ENCODE measurements at regions of chr10 and their contacts with region 1.

Region 1: GRCh38 chr10:69506834-69507721 is 55.8 kb downstream of the TSPAN15 start:
- DNase-seq: no peak
- ATAC-seq: peak; percentile 3 to 49 (median 25)
- H3K4me3 ChIP-seq: peak overlapping the region in 5 of 10 donors; percentile 4 to 48 (median 33)
- H3K27ac ChIP-seq: peak overlapping the region in 6 of 10 donors; percentile 29 to 65 (median 50)
- H3K4me1 ChIP-seq: peaks cover 0 to 13% (median 8%) of the 10 kb centered on the region in 9 donors
- H3K27me3 ChIP-seq: no peaks in the 10 kb centered on the region
- CTCF ChIP-seq: no peak

Region 2: DNA sequence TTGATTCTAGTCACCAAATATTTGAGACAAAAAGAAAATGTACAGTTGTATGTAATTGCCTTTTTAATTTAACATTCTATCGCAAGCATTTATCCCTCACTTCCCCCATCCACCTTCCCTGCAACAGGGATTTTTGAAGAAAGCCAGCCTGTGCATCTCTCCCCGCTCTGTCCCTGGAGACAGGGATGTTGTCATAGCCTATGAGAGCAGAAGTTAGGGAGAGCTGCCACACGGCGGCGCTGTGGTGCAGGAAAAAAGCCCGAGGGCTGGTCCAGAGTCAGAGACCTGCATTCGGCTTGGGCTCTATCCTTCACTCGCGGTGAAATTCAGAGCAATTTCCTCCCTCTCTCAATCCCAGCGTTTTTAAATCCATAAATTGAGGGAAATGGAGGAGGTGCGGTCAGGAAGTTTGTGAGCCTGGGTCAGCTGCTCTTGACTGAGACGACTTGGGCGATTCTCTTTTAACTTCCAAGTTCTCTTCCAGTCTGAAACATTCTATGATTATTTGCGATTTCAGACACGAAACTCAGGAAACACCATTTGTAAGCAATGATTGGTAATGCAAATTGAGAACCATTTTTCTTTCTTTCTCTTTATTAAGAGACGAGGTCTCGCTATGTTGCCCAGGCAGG is 269.4 kb before region 1 on chr10:
- intact Hi-C with region 1: loop called in 4 of 10 experiments (anchors 5 to 10 kb)
- DNase-seq: peak; percentile 88 to 91
- ATAC-seq: peak; percentile 95 to 100 (median 98)
- H3K4me3 ChIP-seq: no peak overlapping the region
- H3K27ac ChIP-seq: no peak overlapping the region
- H3K4me1 ChIP-seq: peaks cover 0 to 19% (median 4%) of the 10 kb centered on the region in 9 donors
- H3K27me3 ChIP-seq: no peaks in the 10 kb centered on the region
- CTCF ChIP-seq: peak; percentile 76 to 96 (median 93)

Region 3: GRCh38 chr10:69425511-69426298 is 81.4 kb before region 1 on chr10:
- intact Hi-C with region 1: loop called (anchors 1 to 5 kb)
- DNase-seq: no peak
- ATAC-seq: no peak
- H3K4me3 ChIP-seq: no peak overlapping the region
- H3K27ac ChIP-seq: no peak overlapping the region
- H3K4me1 ChIP-seq: peaks cover 0 to 18% (median 6%) of the 10 kb centered on the region in 9 donors
- H3K27me3 ChIP-seq: no peaks in the 10 kb centered on the region
- CTCF ChIP-seq: no peak

Region 4: GRCh38 chr10:69451209-69451783 is 55.8 kb before region 1 on chr10 and contains the start of gene TSPAN15:
- intact Hi-C with region 1: loop called in 2 of 10 experiments (anchors 1 to 10 kb)
- DNase-seq: peak; percentile 91 to 94
- ATAC-seq: peak; percentile 94 to 98 (median 97)
- H3K4me3 ChIP-seq: peak within 1 kb of the TSS; percentile 79 to 98 (median 90)
- H3K27ac ChIP-seq: peak within 1 kb of the TSS; percentile 49 to 89 (median 78)
- H3K4me1 ChIP-seq: peaks cover 0 to 60% (median 38%) of the 10 kb centered on the region in 9 donors
- H3K27me3 ChIP-seq: peaks cover 0 to 14% (median 0%) of the 10 kb centered on the region in 7 donors
- CTCF ChIP-seq: no peak
- total RNA-seq, gene TSPAN15: 5.0 to 16.5 (median 9.4) TPM

Measured in heart right ventricle (tissue), 16 donors.